Prostate gland (tissue), 2 donors: ENCODE measurements at regions of chr11 and their contacts with region 1.

Region 1: GRCh38 chr11:83193315-83194280 is at the start of gene ANKRD42:
- DNase-seq: peak; percentile 95
- H3K4me3 ChIP-seq: peak within 1 kb of the TSS; percentile 49 to 62
- H3K27ac ChIP-seq: peak within 1 kb of the TSS; percentile 80 to 85
- H3K4me1 ChIP-seq: peaks cover 10% of the 10 kb centered on the region
- H3K27me3 ChIP-seq: no peaks in the 10 kb centered on the region
- CTCF ChIP-seq: peak in 1 of 4 experiments; percentile 12
- POLR2A ChIP-seq: peak; percentile 79
- total RNA-seq, gene ANKRD42: 11.6 to 24.5 TPM

Region 2: GRCh38 chr11:83071567-83072349 is 121.8 kb before region 1 on chr11 and contains the start of gene RAB30:
- intact Hi-C with region 1: loop called (anchors 10 kb)
- DNase-seq: peak; percentile 99
- H3K4me3 ChIP-seq: peak within 1 kb of the TSS; percentile 84 to 90
- H3K27ac ChIP-seq: peak within 1 kb of the TSS; percentile 94 to 95
- H3K4me1 ChIP-seq: peaks cover 3% of the 10 kb centered on the region
- H3K27me3 ChIP-seq: no peaks in the 10 kb centered on the region
- CTCF ChIP-seq: peak in 2 of 4 experiments; percentile 5 to 18
- POLR2A ChIP-seq: peak; percentile 92
- total RNA-seq, gene RAB30: 13.3 to 15.9 TPM

Region 3: DNA sequence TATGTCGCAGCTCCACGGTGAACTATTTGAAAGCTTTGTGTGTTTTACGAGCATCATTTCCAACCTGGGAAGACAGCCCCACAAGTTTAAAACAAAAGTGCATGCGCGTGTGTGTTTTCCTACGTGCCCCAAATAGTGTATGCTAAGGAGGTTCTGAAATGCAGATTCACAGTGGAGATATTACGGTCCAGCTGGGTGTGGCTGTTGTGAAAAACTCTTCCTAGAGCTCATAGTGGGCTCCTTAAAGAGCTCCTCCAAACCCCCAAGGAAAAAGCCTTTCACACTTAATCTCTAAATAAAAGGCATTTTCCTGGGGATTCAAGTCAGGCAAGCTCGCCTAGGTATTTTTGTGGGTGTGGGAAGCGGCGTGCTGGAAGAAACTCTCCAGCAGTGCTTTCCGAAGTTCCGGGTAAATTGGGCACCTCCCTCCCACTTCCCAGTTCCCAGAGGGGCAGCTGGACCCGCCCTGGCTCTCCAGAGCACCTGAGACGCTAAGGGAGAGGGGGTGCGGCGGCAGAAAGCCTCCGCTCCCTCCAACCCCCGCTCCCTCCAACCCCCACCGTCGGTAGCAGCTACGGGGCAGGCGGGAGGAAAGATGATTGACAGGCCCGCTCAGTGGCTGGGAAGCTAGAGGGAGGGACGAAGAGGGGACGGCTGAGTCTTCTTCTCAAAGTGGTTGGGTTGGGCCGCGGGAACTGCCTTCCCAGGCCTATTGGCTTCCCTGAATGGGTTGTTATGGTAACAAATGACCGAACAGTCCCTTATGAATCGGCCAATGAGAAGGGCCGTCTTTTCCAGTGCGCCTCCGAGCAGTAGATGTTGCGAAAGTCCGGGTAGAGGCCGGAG is 37.2 kb before region 1 on chr11:
- intact Hi-C with region 1: loop called (anchors 5 kb)
- DNase-seq: peak; percentile 99
- H3K4me3 ChIP-seq: peak overlapping the region; percentile 46 to 98
- H3K27ac ChIP-seq: peak overlapping the region; percentile 100
- H3K4me1 ChIP-seq: no peaks in the 10 kb centered on the region
- H3K27me3 ChIP-seq: no peaks in the 10 kb centered on the region
- CTCF ChIP-seq: peak in 1 of 4 experiments; percentile 19
- POLR2A ChIP-seq: peak; percentile 69

Region 4: GRCh38 chr11:83285771-83286528 is 92.4 kb after region 1 on chr11 and contains the start of gene CCDC90B:
- intact Hi-C with region 1: loop called (anchors 2 kb)
- DNase-seq: peak; percentile 98
- H3K4me3 ChIP-seq: peak within 1 kb of the TSS; percentile 72
- H3K27ac ChIP-seq: peak within 1 kb of the TSS; percentile 96 to 97
- H3K4me1 ChIP-seq: peaks cover 12% of the 10 kb centered on the region
- H3K27me3 ChIP-seq: no peaks in the 10 kb centered on the region
- CTCF ChIP-seq: peak in 2 of 4 experiments; percentile 38 to 42
- POLR2A ChIP-seq: peak; percentile 81
- total RNA-seq, gene CCDC90B: 43.8 to 48.2 TPM